ENCODE measurements at regions of chr4 and their contacts with region 1.

Region 1: GRCh38 chr4:89898304-89898716 is 3.7 kb downstream of the MMRN1 start:
- DNase-seq: no peak
- H3K4me3 Mint-ChIP-seq: no peak overlapping the region
- H3K27ac Mint-ChIP-seq: no peak overlapping the region
- H3K4me1 Mint-ChIP-seq: peaks cover 15% of the 10 kb centered on the region
- H3K27me3 Mint-ChIP-seq: no peaks in the 10 kb centered on the region

Region 2: DNA sequence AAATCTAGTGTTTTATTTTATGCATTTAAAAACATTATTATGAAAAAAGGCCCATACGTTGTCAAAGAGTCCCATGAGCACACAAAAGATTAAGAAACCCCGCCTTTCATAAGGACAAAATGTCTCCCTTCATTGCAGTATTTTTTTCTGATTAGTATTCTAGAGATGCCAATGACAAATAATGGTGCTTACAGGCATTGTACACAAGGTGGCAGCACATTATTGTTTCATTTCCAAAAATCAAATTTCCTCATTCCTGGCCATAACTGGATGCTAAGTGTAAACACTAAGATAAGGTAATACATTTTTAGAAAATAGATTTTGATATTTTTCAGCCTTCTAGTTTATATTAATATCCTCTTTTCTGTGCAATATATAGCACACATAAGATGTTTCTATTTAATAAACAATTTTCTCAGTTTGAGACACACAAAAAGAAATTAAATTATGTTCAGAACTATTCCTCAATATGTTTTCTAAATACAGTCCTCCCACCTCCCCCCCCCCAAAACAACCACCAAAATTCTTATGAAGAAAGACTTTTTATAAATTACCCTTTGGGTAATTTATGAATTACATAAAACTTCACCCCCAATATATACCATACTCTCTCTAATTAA is 739.3 kb before region 1 on chr4:
- intact Hi-C with region 1: loop called (anchors 1 kb)
- DNase-seq: no peak
- H3K4me3 Mint-ChIP-seq: no peak overlapping the region
- H3K27ac Mint-ChIP-seq: no peak overlapping the region
- H3K4me1 Mint-ChIP-seq: no peaks in the 10 kb centered on the region
- H3K27me3 Mint-ChIP-seq: peaks cover 13% of the 10 kb centered on the region

Region 3: DNA sequence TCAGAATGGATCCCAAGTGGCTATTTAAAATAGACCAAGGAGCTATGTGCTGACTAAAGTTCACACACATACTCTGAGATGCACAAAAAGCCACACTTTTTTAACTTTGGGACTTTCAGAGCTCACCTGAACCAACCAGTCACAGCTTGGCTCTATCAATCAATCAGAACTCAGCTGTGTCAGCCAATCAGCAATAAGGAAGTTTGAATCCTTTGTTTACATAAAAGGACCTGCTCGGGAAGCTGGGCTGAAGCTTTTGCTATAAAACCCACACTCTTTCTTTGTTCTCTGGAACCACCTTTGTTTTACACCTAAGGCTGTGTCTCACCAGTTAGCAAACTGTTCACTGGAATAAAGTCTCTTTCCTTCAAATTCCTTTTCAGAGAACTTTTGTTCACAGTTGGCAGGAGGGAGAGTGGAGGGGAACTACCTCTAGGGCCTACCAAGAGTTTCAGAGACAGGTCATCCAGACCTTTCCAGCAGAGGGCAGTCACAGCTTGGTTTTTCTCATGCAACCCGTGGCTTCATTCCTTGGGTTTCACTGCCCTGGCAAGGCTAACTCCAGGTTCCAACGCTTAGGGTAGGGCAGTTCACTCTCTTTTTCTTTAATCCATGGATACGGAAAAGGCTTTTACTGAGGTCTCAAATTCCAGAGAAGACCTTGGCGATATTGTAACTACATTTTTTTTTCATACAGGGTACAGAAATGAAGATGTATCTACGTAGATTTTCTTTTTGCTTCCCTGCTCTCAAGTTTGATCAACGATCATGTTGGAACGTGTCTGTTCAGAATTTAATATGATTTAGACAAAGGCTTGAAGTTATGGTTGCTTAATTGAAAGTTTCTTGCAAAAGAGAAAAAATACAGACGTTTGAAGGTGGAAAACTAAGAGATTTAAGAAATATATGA is 671.4 kb before region 1 on chr4:
- intact Hi-C with region 1: loop called (anchors 1 kb)
- DNase-seq: peak; percentile 62
- H3K4me3 Mint-ChIP-seq: peak overlapping the region; percentile 28
- H3K27ac Mint-ChIP-seq: no peak overlapping the region
- H3K4me1 Mint-ChIP-seq: peaks cover 11% of the 10 kb centered on the region
- H3K27me3 Mint-ChIP-seq: no peaks in the 10 kb centered on the region

Region 4: DNA sequence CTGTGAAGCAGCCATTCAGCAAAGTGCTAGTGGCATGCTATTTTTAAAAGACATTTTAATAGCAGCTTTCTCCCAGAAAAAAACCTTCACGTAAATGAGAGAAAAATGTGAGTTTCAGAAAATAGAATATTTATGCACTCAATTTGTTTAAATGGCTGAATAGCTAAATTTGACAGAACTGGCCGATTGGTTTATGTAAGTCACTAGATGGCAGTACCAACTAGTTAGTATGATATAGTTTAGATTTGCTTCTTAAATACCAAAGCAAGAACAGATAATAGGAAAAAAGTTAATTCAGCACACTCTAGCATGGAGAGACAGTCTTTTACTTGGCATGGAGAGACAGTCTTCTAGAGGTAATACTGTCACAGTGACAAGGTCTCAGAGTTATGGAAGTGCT is 311.4 kb before region 1 on chr4:
- intact Hi-C with region 1: loop called (anchors 2 kb)
- DNase-seq: no peak
- H3K4me3 Mint-ChIP-seq: no peak overlapping the region
- H3K27ac Mint-ChIP-seq: no peak overlapping the region
- H3K4me1 Mint-ChIP-seq: no peaks in the 10 kb centered on the region
- H3K27me3 Mint-ChIP-seq: peaks cover 16% of the 10 kb centered on the region

Region 5: DNA sequence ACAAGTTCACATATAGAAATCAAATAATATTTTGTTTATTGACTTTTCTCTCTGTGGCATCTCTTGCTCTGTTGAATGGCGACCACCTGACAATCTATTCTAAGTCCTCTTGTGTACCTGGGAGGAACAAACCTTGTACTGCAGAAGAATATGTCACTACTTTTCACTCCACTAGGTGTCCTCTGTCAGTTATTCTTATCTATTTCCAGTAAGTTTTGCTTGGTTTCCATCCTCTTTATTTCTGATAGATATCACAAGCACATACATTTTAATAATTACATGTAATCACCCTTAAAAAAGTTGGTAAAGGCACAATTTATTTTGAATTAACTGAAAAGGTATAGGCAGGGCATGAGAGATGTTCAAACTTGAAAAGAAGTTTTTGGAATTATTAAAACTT is 299.7 kb before region 1 on chr4:
- intact Hi-C with region 1: loop called (anchors 1 kb)
- DNase-seq: no peak
- H3K4me3 Mint-ChIP-seq: no peak overlapping the region
- H3K27ac Mint-ChIP-seq: no peak overlapping the region
- H3K4me1 Mint-ChIP-seq: no peaks in the 10 kb centered on the region
- H3K27me3 Mint-ChIP-seq: peaks cover 9% of the 10 kb centered on the region

Region 6: GRCh38 chr4:89657931-89658700 is 240.2 kb before region 1 on chr4:
- intact Hi-C with region 1: loop called (anchors 1 kb)
- DNase-seq: no peak
- H3K4me3 Mint-ChIP-seq: no peak overlapping the region
- H3K27ac Mint-ChIP-seq: no peak overlapping the region
- H3K4me1 Mint-ChIP-seq: no peaks in the 10 kb centered on the region
- H3K27me3 Mint-ChIP-seq: peaks cover 6% of the 10 kb centered on the region

Region 7: DNA sequence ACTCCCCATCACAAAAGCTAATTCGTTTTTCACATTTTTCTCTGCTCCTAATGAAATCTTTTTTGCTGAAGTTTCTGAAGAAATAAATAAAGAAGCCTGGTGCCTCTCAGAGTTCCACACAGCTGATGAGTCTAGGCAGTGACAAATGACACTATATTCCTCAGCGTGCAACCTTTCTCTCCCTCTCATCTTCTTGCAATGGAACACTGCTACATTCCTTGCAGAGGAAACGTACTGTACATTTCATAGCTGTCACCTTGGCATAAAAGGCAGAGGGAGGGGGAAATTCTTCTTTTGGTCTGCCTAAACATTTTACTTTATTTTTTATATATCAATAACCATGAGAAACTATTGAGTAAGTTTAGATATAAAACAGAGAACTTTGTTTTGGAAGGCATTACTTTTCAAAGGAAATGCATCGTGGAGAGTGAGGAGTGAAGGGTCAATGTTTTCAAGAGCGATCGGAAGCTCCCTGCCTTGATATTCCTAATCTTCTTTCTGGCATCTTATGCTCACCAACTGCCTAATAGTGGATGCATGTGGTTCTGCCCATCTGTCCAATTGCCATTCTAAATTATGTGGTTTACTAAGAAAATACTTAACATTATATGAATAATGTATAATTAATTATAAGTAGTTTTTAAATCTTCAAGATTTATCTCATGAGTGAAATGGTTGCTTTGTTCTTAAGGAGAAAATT is 90.7 kb before region 1 on chr4:
- intact Hi-C with region 1: no loop called
- DNase-seq: no peak
- H3K4me3 Mint-ChIP-seq: no peak overlapping the region
- H3K27ac Mint-ChIP-seq: no peak overlapping the region
- H3K4me1 Mint-ChIP-seq: no peaks in the 10 kb centered on the region
- H3K27me3 Mint-ChIP-seq: no peaks in the 10 kb centered on the region

Region 8: GRCh38 chr4:89836897-89837384 is 61.4 kb before region 1 on chr4 and contains the start of gene SNCA:
- intact Hi-C with region 1: loop called (anchors 2 kb)
- DNase-seq: peak; percentile 27
- H3K4me3 Mint-ChIP-seq: peak within 1 kb of the TSS; percentile 80
- H3K27ac Mint-ChIP-seq: no peak within 1 kb of the TSS
- H3K4me1 Mint-ChIP-seq: peaks cover 33% of the 10 kb centered on the region
- H3K27me3 Mint-ChIP-seq: peaks cover 71% of the 10 kb centered on the region
- total RNA-seq, gene SNCA: 0.18 and 1.1 TPM in 2 replicates